ENCODE measurements at regions of chr11 and their contacts with region 1.

Region 1: GRCh38 chr11:32297611-32298011 is 137.7 kb downstream of the WT1 start:
- DNase-seq: peak in 38 of 42 donors; percentile 16 to 78 (median 48)

Region 2: GRCh38 chr11:32176223-32176934 is 121.2 kb before region 1 on chr11:
- intact Hi-C with region 1: loop called (anchors 10 kb)
- DNase-seq: peak; percentile 51 to 95 (median 86)